ENCODE measurements at regions of chr20 and their contacts with region 1.

Region 1: DNA sequence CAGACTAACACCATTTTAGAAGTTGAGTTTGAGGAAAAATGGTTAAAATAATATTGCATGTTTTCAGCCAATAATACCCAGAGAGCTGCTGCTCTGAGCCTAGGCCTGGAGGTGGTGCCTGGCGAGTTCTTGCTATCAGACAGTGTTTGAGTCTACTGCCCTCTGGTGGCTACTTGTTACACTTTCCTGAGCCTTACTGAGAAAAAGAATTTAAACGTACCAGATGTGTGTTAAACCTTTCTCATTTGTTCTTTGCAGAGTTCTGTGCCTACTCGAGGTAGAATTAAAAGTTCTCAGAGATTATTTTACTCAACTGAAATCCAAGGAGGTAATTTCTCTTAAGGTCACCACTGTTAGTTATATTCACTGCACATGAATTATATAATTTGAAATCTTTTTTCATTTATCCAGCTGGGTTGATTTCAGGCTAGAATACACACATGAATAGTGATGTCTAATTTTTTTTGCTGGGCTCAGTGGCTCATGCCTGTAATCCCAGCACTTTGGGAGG is 38.2 kb downstream of the SHLD1 start:
- DNase-seq: peak; percentile 61 to 83 (median 67)
- H3K4me3 ChIP-seq: no peak overlapping the region
- H3K27ac ChIP-seq: no peak overlapping the region
- H3K4me1 ChIP-seq: peaks cover 2% of the 10 kb centered on the region
- H3K27me3 ChIP-seq: no peaks in the 10 kb centered on the region
- CTCF ChIP-seq: peak; percentile 85 to 89 (median 86)
- EP300 ChIP-seq: no peak
- POLR2A ChIP-seq: no peak

Region 2: DNA sequence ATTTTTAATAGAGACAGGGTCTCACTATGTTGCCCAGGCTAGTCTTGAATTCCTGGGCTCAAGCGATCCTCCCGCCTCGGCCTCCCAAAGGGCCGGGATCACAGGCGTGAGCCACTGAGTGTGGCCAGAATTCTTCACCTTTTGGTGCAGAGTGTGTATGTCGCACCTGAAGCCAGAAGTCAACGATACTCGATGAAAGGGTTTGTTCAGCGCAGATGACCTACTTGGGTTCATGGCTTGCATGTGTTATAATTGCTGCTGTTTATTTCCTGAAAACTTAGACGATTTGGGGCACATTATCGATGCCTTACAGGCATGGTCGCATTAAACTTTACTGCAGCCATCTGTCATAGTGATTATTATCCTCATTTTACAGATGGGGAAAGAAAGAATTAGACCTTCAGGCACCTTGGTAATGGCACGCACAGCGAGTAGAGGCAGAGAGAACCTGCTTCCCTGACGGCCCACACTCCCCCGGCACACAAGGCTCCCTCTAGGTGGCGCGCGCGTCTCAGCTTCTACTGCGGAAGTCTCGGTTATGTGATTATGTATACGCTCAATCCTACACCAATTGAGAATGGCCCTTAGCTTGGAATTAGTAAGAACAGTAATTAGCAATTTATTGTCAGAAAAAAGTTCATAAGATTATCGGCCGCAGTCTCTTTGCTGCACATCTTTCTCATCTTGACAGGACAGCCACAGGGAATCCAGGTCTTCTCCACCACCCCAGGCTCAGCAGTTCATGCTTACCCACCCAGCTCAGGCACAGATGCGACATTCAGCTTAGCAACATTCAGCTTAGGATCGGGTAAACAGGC is 258.9 kb before region 1 on chr20:
- intact Hi-C with region 1: loop called (anchors 2 to 10 kb)
- DNase-seq: peak; percentile 77 to 88 (median 84)
- H3K4me3 ChIP-seq: no peak overlapping the region
- H3K27ac ChIP-seq: no peak overlapping the region
- H3K4me1 ChIP-seq: no peaks in the 10 kb centered on the region
- H3K27me3 ChIP-seq: no peaks in the 10 kb centered on the region
- CTCF ChIP-seq: peak; percentile 48 to 67 (median 62)
- EP300 ChIP-seq: no peak
- POLR2A ChIP-seq: no peak

Region 3: DNA sequence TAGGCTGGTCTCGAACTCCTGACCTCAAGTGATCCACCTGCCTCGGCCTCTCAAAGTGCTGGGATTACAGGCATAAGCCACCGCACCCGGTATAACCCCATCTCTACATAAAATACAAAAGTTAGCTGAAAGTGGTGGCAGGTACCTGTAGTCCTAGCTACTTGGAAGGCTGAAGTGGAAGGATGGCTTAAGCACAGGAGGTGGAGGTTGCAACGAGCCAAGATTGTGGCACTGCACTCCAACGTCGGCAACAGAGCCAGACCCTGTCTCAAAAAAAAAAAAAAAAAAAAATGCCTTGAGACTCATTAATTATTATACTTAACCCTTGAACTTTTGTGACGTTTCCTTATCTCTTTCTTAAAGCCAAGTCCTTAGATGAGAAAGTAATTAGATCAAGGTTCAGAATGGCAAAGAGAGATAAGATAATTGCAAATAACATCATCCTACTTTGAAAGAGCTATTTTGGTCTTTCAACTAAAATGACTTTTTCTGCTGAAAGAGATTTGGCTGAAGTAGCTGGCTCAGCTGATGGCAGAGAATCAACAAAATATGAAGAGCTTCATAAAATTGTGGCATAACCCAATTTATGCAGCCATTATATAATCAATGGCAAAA is 42.9 kb before region 1 on chr20:
- intact Hi-C with region 1: loop called in 1 of 4 experiments (anchors 2 kb)
- DNase-seq: no peak
- H3K4me3 ChIP-seq: no peak overlapping the region
- H3K27ac ChIP-seq: no peak overlapping the region
- H3K4me1 ChIP-seq: no peaks in the 10 kb centered on the region
- H3K27me3 ChIP-seq: no peaks in the 10 kb centered on the region
- CTCF ChIP-seq: no peak
- EP300 ChIP-seq: no peak
- POLR2A ChIP-seq: no peak

Region 4: GRCh38 chr20:5973172-5973571 is 184.7 kb after region 1 on chr20:
- intact Hi-C with region 1: no loop called
- DNase-seq: no peak
- H3K4me3 ChIP-seq: no peak overlapping the region
- H3K27ac ChIP-seq: no peak overlapping the region
- H3K4me1 ChIP-seq: no peaks in the 10 kb centered on the region
- H3K27me3 ChIP-seq: no peaks in the 10 kb centered on the region
- CTCF ChIP-seq: no peak
- EP300 ChIP-seq: no peak
- POLR2A ChIP-seq: no peak

Region 5: DNA sequence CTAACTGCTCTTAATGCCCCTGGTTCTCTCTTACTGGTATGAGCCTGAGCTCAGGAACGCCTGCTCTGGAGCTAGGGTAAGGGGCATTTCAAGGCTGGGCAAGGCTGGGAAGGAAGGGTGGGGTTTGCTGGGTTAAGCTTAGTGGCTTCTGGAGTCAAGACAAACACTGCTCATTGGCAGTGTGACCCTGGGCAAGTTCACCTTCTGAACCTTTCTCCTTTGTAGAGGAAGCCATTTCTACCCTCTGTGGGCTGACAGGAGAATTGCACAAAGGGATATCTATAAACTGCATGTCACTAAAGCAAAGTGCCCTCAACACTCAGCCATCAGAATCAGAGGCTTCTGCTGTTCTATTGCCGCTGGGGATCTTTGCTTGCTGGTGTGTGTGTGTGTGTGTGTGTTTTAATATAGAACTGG is 285.7 kb after region 1 on chr20:
- intact Hi-C with region 1: loop called in 2 of 4 experiments (anchors 5 to 10 kb)
- DNase-seq: no peak
- H3K4me3 ChIP-seq: no peak overlapping the region
- H3K27ac ChIP-seq: no peak overlapping the region
- H3K4me1 ChIP-seq: no peaks in the 10 kb centered on the region
- H3K27me3 ChIP-seq: no peaks in the 10 kb centered on the region
- CTCF ChIP-seq: no peak
- EP300 ChIP-seq: no peak
- POLR2A ChIP-seq: no peak

Region 6: DNA sequence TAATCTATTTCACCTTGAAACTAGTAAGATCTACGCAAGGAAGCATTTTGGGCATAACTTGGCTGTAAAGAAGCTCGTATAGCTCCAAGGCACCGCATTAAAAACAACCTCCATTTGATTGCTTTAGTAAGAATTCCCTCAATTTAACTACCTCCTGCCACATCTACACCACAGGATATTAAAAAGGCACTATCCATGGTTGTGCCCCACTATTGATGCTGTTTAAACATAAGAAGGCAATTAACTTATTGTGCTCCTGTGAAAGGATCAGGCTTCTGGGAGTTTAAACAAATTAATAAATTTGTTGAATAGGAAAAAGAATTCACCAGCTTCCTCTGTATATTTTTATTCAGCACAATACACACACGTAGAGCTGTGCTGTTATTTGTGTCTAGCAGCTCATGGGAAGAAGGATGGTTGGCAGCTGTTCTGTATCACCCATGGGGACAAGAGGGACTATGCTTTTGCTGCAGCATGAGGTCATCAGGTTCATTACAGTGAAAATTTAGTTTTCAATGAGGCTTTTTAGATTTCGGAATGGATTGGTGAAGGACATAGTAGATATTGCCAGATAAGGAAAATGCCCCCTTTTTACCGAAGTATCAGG is 1638.6 kb after region 1 on chr20:
- intact Hi-C with region 1: no loop called
- DNase-seq: no peak
- H3K4me3 ChIP-seq: no peak overlapping the region
- H3K27ac ChIP-seq: no peak overlapping the region
- H3K4me1 ChIP-seq: no peaks in the 10 kb centered on the region
- H3K27me3 ChIP-seq: no peaks in the 10 kb centered on the region
- CTCF ChIP-seq: no peak
- EP300 ChIP-seq: no peak
- POLR2A ChIP-seq: no peak

Measured in ovary (tissue), 10 donors.